SK-N-SH (cell line): ENCODE measurements at regions of chr2 and their contacts with region 1.

Region 1: DNA sequence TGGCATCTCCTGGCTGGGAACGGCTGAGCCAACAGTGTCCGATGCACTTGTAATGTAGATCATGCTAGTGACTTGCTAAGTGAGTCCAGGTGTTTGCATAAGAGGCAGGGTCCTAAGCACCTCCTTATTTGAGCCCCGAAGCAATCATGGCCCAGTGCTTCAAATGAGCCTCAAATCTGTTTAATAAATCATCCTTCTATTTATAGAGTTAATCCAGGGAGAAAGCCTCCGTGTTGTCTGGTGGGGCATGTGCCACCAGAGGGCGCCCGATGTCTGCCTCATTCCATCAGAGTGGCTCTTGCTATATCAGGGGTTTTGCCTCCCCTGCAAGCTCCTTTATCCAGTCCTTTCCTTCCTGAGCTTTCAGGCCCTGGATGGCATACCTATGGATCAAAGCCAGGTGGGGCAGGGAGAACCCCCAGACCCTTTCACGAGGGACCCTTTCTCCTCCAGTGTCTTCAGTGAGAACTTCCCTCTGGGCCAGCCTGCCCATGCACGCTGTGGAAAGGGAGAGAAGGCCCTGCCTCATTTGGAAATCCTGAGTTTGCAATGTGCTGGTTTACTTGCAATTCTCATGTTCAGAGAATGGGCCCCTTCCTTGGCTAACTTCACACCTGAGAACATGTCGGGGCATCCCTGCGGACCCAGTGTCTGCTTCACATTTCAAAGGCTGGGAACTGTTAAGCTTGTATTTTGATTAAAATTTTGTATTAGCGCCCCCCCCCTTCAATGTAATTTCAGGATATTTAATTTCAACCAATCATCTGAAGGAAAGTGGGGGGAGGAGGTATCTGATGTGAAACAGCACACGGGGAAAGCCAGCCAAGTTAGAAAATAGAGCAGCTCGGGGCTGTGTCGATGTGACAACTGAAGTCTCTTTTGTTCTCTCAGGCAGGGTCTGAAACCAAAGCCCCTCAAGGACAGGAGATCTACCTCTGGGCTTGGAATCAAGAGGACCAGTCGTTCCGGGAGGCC is 39.7 kb downstream of the RDH14 start:
- DNase-seq: peak; percentile 84
- H3K4me3 ChIP-seq: no peak overlapping the region; a peak in 1 of 4 replicates
- H3K27ac ChIP-seq: peak overlapping the region; percentile 57 to 67
- H3K4me1 ChIP-seq: peaks cover 27 to 33% of the 10 kb centered on the region in 2 experiments
- H3K27me3 ChIP-seq: no peaks in the 10 kb centered on the region
- CTCF ChIP-seq: peak; percentile 99
- EP300 ChIP-seq: peak in 1 of 2 experiments; percentile 39; a peak in 1 of 4 replicates
- RAD21 ChIP-seq: peak; percentile 100

Region 2: GRCh38 chr2:18365342-18365741 is 155.4 kb before region 1 on chr2:
- CTCF ChIA-PET with region 1: no interaction called
- POLR2A ChIA-PET with region 1: no interaction called
- DNase-seq: no peak
- H3K4me3 ChIP-seq: no peak overlapping the region
- H3K27ac ChIP-seq: no peak overlapping the region
- H3K4me1 ChIP-seq: no peaks in the 10 kb centered on the region; a peak in 1 of 4 replicates
- H3K27me3 ChIP-seq: peaks cover 16% of the 10 kb centered on the region; the same call in 1 of the 2 replicates
- CTCF ChIP-seq: no peak
- EP300 ChIP-seq: no peak
- RAD21 ChIP-seq: no peak

Region 3: DNA sequence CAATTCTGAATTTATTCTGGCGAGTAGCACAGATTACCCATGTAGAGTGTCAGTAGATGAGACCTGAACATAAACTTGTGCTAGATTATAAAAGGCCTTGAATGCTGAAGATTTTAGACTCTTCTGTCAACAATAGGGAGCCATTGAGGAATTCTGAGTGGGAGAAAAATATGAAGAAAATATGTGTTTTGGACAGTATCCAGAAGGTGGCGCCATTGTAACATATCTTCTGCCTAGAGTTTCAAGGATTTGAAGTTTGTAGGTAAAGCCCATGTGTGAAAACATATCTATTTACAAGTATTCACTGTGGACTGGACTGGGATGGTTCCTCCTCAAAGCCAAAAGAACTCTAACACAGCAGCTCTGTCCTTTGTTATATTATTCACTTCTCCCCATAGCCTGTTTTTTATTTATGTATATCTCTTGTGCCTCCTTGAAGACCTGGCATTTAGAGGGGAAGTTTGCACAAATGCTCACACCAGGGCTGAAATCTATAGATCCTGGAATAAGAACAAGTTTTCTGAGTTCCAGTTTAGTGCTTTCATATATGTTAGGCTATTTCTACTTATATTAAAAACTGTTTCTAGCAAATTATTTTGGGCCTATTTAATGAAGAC is 85.2 kb before region 1 on chr2:
- CTCF ChIA-PET with region 1: interaction called, 16 read pairs
- POLR2A ChIA-PET with region 1: no interaction called
- DNase-seq: peak; percentile 21
- H3K4me3 ChIP-seq: no peak overlapping the region
- H3K27ac ChIP-seq: no peak overlapping the region; a peak in 1 of 4 replicates
- H3K4me1 ChIP-seq: peaks cover 4 to 28% of the 10 kb centered on the region in 2 experiments; a peak in 3 of 4 replicates
- H3K27me3 ChIP-seq: no peaks in the 10 kb centered on the region
- CTCF ChIP-seq: peak; percentile 93
- EP300 ChIP-seq: no peak
- RAD21 ChIP-seq: peak; percentile 92

Region 4: DNA sequence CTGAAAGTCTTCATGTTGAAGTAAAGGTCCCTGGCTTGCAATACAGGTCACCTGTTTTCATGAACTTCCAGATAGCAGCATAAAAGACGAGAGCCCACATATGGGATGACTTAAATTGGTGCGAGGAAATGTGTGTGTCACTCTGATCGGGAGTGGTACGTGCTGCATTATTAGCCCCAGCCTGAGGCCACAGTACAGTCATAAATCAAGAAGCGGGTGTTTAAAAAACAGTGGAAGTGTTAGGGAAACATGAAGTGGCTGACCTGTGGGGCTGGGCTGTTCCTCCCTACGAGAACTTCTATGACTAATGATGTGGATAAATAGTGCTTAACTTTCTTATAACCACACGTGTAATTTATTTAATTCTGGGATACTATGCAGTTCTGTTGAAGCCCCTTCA is 15.4 kb after region 1 on chr2:
- CTCF ChIA-PET with region 1: interaction called, 55 read pairs
- POLR2A ChIA-PET with region 1: no interaction called
- DNase-seq: no peak
- H3K4me3 ChIP-seq: no peak overlapping the region
- H3K27ac ChIP-seq: no peak overlapping the region
- H3K4me1 ChIP-seq: no peaks in the 10 kb centered on the region
- H3K27me3 ChIP-seq: no peaks in the 10 kb centered on the region
- CTCF ChIP-seq: no peak
- EP300 ChIP-seq: no peak
- RAD21 ChIP-seq: no peak

Region 5: DNA sequence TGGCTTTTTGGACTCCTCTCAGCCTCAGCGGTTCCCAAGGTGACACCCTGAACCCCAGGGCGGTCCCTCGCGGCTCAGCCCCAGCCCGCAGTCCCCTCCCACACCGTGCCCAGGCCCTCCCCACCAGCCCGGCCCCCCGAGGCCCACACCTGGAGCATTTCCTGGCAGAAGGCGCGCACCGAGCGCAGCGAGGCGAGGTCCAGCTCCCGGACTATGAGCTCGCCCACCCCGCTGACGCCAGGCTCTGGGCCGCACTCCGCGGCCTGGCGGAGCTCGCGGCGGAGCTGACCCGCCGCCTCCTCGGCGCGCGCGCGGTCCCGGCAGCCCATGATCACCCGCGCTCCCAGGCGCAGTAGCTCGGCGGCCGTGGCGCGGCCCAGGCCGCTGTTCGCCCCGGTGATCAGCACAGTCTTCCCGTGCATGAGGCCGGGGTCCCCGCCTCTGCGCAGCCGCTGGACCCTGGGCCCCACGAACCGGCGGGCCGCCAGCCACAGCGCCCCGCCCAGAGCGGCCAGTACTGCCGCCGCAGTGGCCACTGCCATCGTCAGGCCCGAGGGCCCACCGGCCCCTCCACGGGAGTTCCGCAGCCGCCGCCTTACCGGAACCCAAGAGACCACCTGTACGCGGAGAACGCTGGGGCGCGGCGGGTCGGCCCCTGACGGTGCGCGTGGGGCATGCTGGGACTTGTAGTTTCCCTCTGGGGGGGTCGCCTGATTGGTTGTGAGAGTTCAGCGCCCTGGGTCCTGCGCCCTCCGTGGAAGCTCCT is 39.5 kb after region 1 on chr2 and contains the start of gene RDH14:
- CTCF ChIA-PET with region 1: interaction called, 31 read pairs
- POLR2A ChIA-PET with region 1: interaction called, 7 read pairs
- DNase-seq: peak; percentile 95
- H3K4me3 ChIP-seq: peak within 1 kb of the TSS; percentile 86 to 95
- H3K27ac ChIP-seq: peak within 1 kb of the TSS; percentile 81 to 93
- H3K4me1 ChIP-seq: peaks cover 22 to 28% of the 10 kb centered on the region in 2 experiments; a peak in 3 of 4 replicates
- H3K27me3 ChIP-seq: no peaks in the 10 kb centered on the region
- CTCF ChIP-seq: no peak; the same call in none of the 2 replicates
- EP300 ChIP-seq: no peak
- RAD21 ChIP-seq: no peak
- polyA plus RNA-seq, gene RDH14: 20.2 and 30.7 TPM in 2 replicates

Region 6: GRCh38 chr2:18690342-18690741 is 169.6 kb after region 1 on chr2:
- CTCF ChIA-PET with region 1: interaction called, 12 read pairs
- POLR2A ChIA-PET with region 1: no interaction called
- DNase-seq: peak; percentile 27
- H3K4me3 ChIP-seq: no peak overlapping the region
- H3K27ac ChIP-seq: no peak overlapping the region
- H3K4me1 ChIP-seq: peaks cover 0 to 4% of the 10 kb centered on the region in 2 experiments; a peak in 2 of 4 replicates
- H3K27me3 ChIP-seq: no peaks in the 10 kb centered on the region
- CTCF ChIP-seq: peak; percentile 45
- EP300 ChIP-seq: no peak
- RAD21 ChIP-seq: peak; percentile 23

Region 7: DNA sequence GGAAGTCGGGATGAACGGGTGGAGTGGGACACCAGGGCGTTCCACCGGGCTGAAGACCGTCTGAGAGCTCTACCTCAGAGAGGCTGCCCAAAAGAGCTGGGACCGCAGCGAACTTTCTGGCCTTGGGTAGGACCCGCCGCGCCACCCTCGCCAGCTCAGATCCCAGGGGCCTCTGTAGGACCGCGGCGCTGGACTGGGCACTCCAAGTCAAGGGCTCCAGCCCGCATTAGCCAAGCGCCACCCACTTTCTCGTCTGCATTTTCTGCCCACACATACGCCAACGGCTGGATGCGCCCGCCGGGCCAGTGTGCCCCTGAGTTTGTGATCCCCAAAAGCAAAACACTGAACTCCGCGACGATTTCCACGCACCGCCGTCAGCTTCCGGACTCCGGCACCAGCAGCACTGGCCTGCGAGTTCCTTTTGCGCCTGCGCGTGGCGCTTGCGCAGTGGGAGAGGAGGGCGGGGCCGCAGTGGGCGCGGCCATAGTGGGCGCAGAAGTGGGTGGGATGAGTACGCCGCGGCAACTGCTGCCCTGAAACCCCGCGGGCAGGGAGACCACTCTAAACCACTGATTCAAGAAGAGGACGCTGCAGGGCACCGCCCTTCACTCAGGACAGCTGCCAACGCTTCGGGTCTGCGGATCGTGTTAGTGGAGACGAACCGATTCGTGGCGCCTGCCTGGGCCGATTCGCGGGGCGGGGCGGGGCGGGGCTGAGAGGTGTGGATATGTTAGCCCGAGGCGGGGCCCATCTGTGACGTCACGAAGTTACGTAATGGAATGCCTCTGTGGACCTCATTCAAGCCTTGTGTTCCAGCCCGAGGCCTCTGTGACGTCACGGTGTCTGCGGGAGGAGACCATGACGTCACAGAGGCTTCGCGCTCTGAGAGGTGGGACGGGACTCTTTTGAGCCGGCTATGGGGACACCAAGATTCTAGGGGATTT is 827.2 kb after region 1 on chr2:
- CTCF ChIA-PET with region 1: interaction called, 111 read pairs
- POLR2A ChIA-PET with region 1: no interaction called
- DNase-seq: peak; percentile 98
- H3K4me3 ChIP-seq: peak overlapping the region; percentile 81 to 99
- H3K27ac ChIP-seq: peak overlapping the region; percentile 86 to 96
- H3K4me1 ChIP-seq: peaks cover 0 to 28% of the 10 kb centered on the region in 2 experiments; a peak in 2 of 4 replicates
- H3K27me3 ChIP-seq: no peaks in the 10 kb centered on the region
- CTCF ChIP-seq: no peak
- EP300 ChIP-seq: no peak; a peak in 1 of 4 replicates
- RAD21 ChIP-seq: no peak

Region 8: DNA sequence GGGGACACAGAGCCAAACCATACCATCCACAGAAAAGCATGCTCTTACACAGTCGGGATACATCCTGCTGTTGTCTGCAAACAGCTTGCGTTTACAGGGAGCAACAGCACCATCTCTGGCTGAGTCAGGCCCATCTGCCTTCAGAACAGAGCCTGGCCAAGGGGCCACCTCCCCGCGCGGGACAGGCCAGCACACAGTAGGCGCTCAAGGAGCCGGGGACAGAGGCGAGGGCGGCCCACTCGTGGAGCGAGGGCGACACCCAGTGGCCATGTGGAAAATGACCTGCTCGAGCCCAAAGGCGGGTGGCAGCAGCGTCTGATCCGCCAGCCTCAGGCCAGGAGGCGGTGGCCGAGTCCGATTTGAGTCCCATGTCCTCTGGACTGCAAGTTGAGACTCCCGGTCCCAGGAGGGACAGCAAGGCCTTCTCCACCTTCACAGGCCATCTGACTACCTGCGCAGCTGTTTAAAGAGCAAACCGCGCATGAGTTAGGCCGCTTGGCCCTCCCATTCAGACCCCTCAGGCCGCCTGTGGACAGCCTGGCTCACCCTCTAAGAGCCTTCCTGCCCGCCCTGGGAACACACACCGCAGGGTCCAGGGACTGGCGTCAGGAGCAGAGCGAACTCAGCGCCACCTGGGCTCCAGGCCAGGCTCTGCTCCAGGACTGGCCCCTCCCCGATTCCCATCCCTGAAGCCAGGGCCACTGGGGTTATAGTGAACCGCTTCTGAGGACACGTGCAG is 1342.7 kb after region 1 on chr2:
- CTCF ChIA-PET with region 1: interaction called, 47 read pairs
- POLR2A ChIA-PET with region 1: interaction called, 4 read pairs
- DNase-seq: peak; percentile 92
- H3K4me3 ChIP-seq: peak overlapping the region in 1 of 2 experiments; percentile 33; a peak in 1 of 4 replicates
- H3K27ac ChIP-seq: no peak overlapping the region
- H3K4me1 ChIP-seq: peaks cover 0 to 4% of the 10 kb centered on the region in 2 experiments; a peak in 1 of 4 replicates
- H3K27me3 ChIP-seq: peaks cover 5% of the 10 kb centered on the region; the same call in 1 of the 2 replicates
- CTCF ChIP-seq: peak; percentile 99
- EP300 ChIP-seq: no peak
- RAD21 ChIP-seq: peak; percentile 98